K562 (cell line): ENCODE measurements at regions of chr10 and their contacts with region 1.

Region 1: DNA sequence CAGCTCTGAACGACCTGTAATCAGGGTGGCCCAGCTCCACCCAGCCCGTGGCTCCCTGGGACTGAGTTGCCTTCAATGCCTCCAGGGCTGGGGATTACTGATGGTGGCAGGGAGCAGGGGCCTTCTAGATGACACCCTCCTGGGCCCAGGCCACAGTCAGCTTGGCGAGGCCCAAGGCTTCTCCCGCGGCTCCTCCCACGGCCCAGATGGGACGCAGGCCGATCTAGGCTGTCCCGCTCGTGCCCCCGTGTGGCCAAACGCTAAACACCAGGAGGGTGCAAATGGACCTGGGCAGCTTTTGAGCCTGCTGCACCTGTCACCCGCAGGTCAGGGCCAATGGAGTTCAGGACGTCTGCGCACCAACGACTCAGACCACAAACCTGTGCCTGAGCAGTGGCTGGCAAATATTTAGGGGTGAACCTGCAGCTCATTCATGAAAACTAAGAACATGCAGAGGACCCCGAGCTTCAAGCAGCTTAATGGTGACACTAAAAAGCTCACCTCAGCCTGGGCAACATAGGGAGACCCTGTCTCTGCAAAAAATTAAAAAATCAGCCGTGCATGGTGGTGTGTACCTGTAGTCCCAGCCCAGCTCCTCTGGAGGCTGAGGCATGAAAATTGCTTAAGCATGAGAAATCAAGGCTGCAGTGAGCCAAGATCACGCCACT is 43.2 kb downstream of the ASB13 start:
- DNase-seq: peak; percentile 86 to 92 (median 88)
- ATAC-seq: peak; percentile 99
- H3K4me3 ChIP-seq: no peak overlapping the region
- H3K27ac ChIP-seq: no peak overlapping the region
- H3K4me1 ChIP-seq: peaks cover 3 to 21% of the 10 kb centered on the region in 2 experiments; a peak in 3 of 5 replicates
- H3K27me3 ChIP-seq: 0 out of 5 replicates have a peak, but pooled peaks cover 0 to under 1% of the 10 kb centered on the region in 2 experiments
- CTCF ChIP-seq: peak; percentile 90 to 93 (median 91)
- EP300 ChIP-seq: no peak
- POLR2A ChIP-seq: no peak
- RAD21 ChIP-seq: peak; percentile 96 to 98

Region 2: DNA sequence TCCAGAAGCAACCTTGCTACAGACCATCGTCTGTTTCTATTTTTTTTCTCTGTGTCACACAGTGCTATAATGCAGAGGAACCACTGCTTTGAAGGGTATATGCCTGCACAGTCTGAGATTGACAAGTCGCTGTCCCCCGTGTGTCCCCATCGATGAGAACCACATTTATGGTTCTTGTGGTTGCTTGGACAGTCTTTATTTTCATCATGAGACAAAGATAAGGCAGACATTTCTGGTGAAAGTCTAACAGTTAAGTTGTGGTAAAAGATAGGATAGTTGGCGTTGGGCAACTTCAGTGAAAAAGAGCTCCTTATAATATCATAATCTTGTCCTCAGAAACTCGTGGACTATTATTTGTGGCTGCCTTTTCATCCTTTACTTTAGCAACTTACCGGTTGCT is 803.5 kb before region 1 on chr10:
- CTCF ChIA-PET with region 1: interaction called, 6 read pairs
- POLR2A ChIA-PET with region 1: no interaction called
- in situ Hi-C with region 1: loop called (anchors 10 kb)
- intact Hi-C with region 1: loop called (anchors 5 kb)
- DNase-seq: peak in 2 of 4 experiments; percentile 38 to 67
- ATAC-seq: peak; percentile 66
- H3K4me3 ChIP-seq: no peak overlapping the region
- H3K27ac ChIP-seq: no peak overlapping the region; the same call in 2 of the 3 replicates
- H3K4me1 ChIP-seq: peaks cover 0 to 32% of the 10 kb centered on the region in 2 experiments; a peak in 2 of 5 replicates
- H3K27me3 ChIP-seq: no peaks in the 10 kb centered on the region
- CTCF ChIP-seq: no peak
- EP300 ChIP-seq: peak; percentile 50
- POLR2A ChIP-seq: no peak
- RAD21 ChIP-seq: no peak; a peak in 1 of 4 replicates

Region 3: GRCh38 chr10:4825851-4826665 is 797.2 kb before region 1 on chr10 and contains the start of gene AKR1E2:
- CTCF ChIA-PET with region 1: no interaction called
- POLR2A ChIA-PET with region 1: no interaction called
- in situ Hi-C with region 1: loop called (anchors 10 kb)
- intact Hi-C with region 1: no loop called
- DNase-seq: peak; percentile 87 to 92 (median 90)
- ATAC-seq: peak; percentile 95
- H3K4me3 ChIP-seq: peak within 1 kb of the TSS; percentile 46
- H3K27ac ChIP-seq: peak within 1 kb of the TSS; percentile 88
- H3K4me1 ChIP-seq: peaks cover 24 to 29% of the 10 kb centered on the region in 2 experiments
- H3K27me3 ChIP-seq: no peaks in the 10 kb centered on the region
- CTCF ChIP-seq: no peak
- EP300 ChIP-seq: no peak
- POLR2A ChIP-seq: peak; percentile 79
- RAD21 ChIP-seq: no peak
- polyA plus RNA-seq, gene AKR1E2: 4.2 to 4.7 TPM

Region 4: GRCh38 chr10:5446390-5446926 is 176.8 kb before region 1 on chr10:
- CTCF ChIA-PET with region 1: interaction called, 34 read pairs
- POLR2A ChIA-PET with region 1: interaction called, 18 read pairs
- in situ Hi-C with region 1: loop called (anchors 5 kb)
- intact Hi-C with region 1: loop called (anchors 1 kb)
- DNase-seq: peak; percentile 97 to 98 (median 97)
- ATAC-seq: peak; percentile 87
- H3K4me3 ChIP-seq: peak overlapping the region; percentile 56
- H3K27ac ChIP-seq: peak overlapping the region; percentile 74
- H3K4me1 ChIP-seq: peaks cover 4 to 23% of the 10 kb centered on the region in 2 experiments
- H3K27me3 ChIP-seq: no peaks in the 10 kb centered on the region
- CTCF ChIP-seq: no peak
- EP300 ChIP-seq: no peak
- POLR2A ChIP-seq: peak; percentile 98
- RAD21 ChIP-seq: peak; percentile 29 to 31; a peak in 3 of 4 replicates

Region 5: GRCh38 chr10:5457741-5458140 is 165.5 kb before region 1 on chr10:
- CTCF ChIA-PET with region 1: no interaction called
- POLR2A ChIA-PET with region 1: interaction called, 17 read pairs
- in situ Hi-C with region 1: no loop called
- intact Hi-C with region 1: loop called (anchors 5 kb)
- DNase-seq: no peak
- ATAC-seq: no peak
- H3K4me3 ChIP-seq: no peak overlapping the region
- H3K27ac ChIP-seq: peak overlapping the region; percentile 38; the same call in 2 of the 3 replicates
- H3K4me1 ChIP-seq: peaks cover 17 to 32% of the 10 kb centered on the region in 2 experiments; a peak in 4 of 5 replicates
- H3K27me3 ChIP-seq: no peaks in the 10 kb centered on the region
- CTCF ChIP-seq: no peak
- EP300 ChIP-seq: no peak
- POLR2A ChIP-seq: peak; percentile 42; the same call in 1 of the 2 replicates
- RAD21 ChIP-seq: 0 out of 4 replicates have a peak, but pooled peaks of 1 of the 2 experiments have one; percentile 4

Region 6: DNA sequence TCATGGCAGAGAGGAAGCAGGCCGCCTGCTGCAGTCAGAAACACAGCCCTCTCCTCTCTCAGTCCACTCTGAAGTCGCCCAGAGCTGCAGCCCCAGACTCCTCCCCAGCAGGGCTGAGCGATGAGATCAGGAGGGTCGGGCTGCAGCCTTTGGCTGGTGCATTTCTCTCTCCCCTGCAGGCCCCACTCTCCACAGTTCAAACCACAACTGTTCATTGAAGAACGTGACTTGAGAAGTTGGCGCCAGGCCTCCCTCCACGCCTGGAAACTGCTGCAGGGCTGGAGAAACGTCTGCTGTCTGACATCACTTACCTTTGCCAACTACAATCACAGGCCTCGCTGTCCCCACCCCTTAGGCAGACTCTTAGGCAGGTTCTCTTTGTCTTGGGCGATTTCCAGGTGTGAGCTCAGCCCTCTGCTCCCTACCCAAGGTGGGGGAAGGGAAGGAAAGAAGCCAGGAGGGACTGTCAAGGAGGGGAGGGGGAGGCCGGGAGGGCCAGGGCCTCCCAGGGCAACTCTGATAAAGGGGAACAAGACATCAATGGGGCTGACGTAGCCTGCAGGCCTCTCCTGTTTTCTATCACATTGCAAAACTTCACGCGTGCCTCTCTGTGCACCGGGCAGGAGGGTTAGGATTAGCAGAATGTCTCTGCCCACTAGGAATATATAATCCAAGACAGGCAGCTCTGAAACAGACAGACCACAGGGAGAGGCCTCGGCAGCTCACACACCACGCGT is 156.6 kb before region 1 on chr10:
- CTCF ChIA-PET with region 1: no interaction called
- POLR2A ChIA-PET with region 1: interaction called, 17 read pairs
- in situ Hi-C with region 1: no loop called
- intact Hi-C with region 1: loop called (anchors 5 kb)
- DNase-seq: peak; percentile 62 to 76 (median 72)
- ATAC-seq: peak; percentile 77
- H3K4me3 ChIP-seq: no peak overlapping the region
- H3K27ac ChIP-seq: peak overlapping the region; percentile 63
- H3K4me1 ChIP-seq: peaks cover 54 to 66% of the 10 kb centered on the region in 2 experiments
- H3K27me3 ChIP-seq: no peaks in the 10 kb centered on the region
- CTCF ChIP-seq: no peak
- EP300 ChIP-seq: no peak
- POLR2A ChIP-seq: no peak; the same call in 1 of the 2 replicates
- RAD21 ChIP-seq: no peak